Naive thymus-derived CD4-positive, alpha-beta T cell (primary cell): ENCODE measurements at regions of chr9 and their contacts with region 1.

Region 1: DNA sequence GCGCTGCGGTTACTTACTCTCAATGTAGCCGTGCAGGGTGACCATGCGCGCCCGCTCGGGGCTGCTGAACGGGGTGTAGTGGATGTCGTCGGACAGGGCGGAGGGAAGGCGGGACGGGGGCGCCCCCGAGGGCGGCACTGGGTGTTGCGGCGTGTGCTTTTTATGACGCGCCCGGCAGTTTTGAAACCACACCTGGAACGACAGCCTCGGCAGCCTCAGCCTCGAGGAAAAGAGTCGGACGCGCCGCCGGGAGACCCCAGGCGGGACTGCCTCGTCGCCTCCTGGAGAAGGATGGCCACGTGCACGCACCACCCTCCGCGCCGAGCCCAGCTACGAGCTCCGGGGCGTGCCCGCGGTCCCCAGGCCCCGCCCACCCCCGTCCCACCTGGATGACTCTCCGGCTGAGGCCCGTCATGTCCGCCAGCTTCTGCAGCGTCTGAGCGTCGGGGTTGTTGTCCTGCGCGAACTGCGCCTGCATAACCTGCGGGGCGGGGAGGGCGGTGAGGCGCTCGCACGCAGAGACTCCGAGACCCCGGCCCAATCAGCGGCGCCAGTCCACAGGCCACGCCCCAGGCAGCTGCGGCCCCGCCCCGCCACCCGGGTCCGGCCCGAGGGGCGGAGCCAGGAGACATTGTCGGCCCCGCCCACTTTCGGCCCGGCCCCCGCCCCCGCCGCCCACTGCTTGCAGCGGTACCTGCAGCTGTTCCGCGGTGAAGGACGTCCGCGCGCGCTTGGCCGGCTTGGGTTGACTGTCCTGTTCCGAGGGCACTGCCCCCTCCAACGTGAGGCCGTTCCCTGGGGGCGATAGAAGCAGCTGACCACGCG is 15.0 kb downstream of the LHX6 start:
- DNase-seq: peak; percentile 11 to 66 (median 28)
- ATAC-seq: peak; percentile 75
- H3K4me3 ChIP-seq: peak overlapping the region; percentile 35
- H3K4me3 Mint-ChIP-seq: peak overlapping the region; percentile 61 to 83 (median 76)
- H3K27ac ChIP-seq: no peak overlapping the region
- H3K27ac Mint-ChIP-seq: no peak overlapping the region
- H3K4me1 ChIP-seq: peaks cover 0 to 10% of the 10 kb centered on the region in 2 donors
- H3K4me1 Mint-ChIP-seq: peaks cover 13 to 25% (median 20%) of the 10 kb centered on the region in 7 donors
- H3K27me3 ChIP-seq: peaks cover 6 to 22% of the 10 kb centered on the region in 2 donors
- H3K27me3 Mint-ChIP-seq: peaks cover 66 to 90% (median 75%) of the 10 kb centered on the region in 5 donors

Region 2: DNA sequence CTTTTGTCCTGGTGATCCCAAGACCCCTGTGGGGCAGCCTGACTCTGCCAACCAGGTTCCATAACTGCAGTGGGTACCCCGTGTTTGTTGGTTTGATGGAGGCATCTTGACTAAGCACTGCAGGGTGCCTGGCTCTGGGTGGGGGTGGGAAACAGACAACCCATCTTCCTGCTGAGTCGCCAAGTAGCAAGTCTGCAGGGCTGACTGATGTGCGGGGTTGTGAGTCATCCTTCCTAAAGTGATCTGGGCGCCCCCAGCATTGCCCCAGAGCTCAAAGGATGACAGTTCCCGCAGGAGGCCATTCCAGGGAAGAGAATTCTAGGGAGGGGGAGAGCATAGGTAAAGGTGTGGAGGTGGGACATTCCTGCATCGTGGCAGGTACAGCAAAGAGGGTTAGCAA is 538.8 kb before region 1 on chr9:
- CTCF ChIA-PET with region 1: no interaction called
- POLR2A ChIA-PET with region 1: no interaction called
- intact Hi-C with region 1: no loop called
- DNase-seq: no peak
- ATAC-seq: no peak
- H3K4me3 ChIP-seq: no peak overlapping the region
- H3K4me3 Mint-ChIP-seq: no peak overlapping the region
- H3K27ac ChIP-seq: no peak overlapping the region
- H3K27ac Mint-ChIP-seq: no peak overlapping the region
- H3K4me1 ChIP-seq: no peaks in the 10 kb centered on the region
- H3K4me1 Mint-ChIP-seq: no peaks in the 10 kb centered on the region
- H3K27me3 ChIP-seq: no peaks in the 10 kb centered on the region
- H3K27me3 Mint-ChIP-seq: peaks cover 0 to 39% (median 9%) of the 10 kb centered on the region in 5 donors

Region 3: GRCh38 chr9:122159026-122159924 is 54.5 kb before region 1 on chr9 and contains the starts of genes MORN5 and NDUFA8:
- CTCF ChIA-PET with region 1: no interaction called
- POLR2A ChIA-PET with region 1: no interaction called
- intact Hi-C with region 1: loop called in 1 of 2 experiments (anchors 2 kb)
- DNase-seq: peak; percentile 94 to 97 (median 96)
- ATAC-seq: peak; percentile 98
- H3K4me3 ChIP-seq: peak within 1 kb of the TSS; percentile 74
- H3K4me3 Mint-ChIP-seq: peak within 1 kb of the TSS; percentile 94 to 100 (median 99)
- H3K27ac ChIP-seq: peak within 1 kb of the TSS; percentile 88
- H3K27ac Mint-ChIP-seq: peak within 1 kb of the TSS; percentile 90 to 99 (median 96)
- H3K4me1 ChIP-seq: peaks cover 7% of the 10 kb centered on the region in 2 donors
- H3K4me1 Mint-ChIP-seq: peaks cover 23 to 51% (median 47%) of the 10 kb centered on the region in 7 donors
- H3K27me3 ChIP-seq: no peaks in the 10 kb centered on the region
- H3K27me3 Mint-ChIP-seq: peaks cover 8 to 25% (median 20%) of the 10 kb centered on the region in 5 donors
- total RNA-seq, gene MORN5: not detected
- total RNA-seq, gene NDUFA8: 6.7 to 35.0 (median 15.6) TPM

Region 4: GRCh38 chr9:122200960-122201595 is 12.7 kb before region 1 on chr9:
- CTCF ChIA-PET with region 1: no interaction called
- POLR2A ChIA-PET with region 1: no interaction called
- intact Hi-C with region 1: no loop called
- DNase-seq: no peak
- ATAC-seq: no peak
- H3K4me3 ChIP-seq: no peak overlapping the region
- H3K4me3 Mint-ChIP-seq: no peak overlapping the region
- H3K27ac ChIP-seq: no peak overlapping the region
- H3K27ac Mint-ChIP-seq: no peak overlapping the region
- H3K4me1 ChIP-seq: no peaks in the 10 kb centered on the region
- H3K4me1 Mint-ChIP-seq: peaks cover 0 to 3% (median 0%) of the 10 kb centered on the region in 7 donors
- H3K27me3 ChIP-seq: no peaks in the 10 kb centered on the region
- H3K27me3 Mint-ChIP-seq: peaks cover 0 to 10% (median 0%) of the 10 kb centered on the region in 5 donors

Region 5: DNA sequence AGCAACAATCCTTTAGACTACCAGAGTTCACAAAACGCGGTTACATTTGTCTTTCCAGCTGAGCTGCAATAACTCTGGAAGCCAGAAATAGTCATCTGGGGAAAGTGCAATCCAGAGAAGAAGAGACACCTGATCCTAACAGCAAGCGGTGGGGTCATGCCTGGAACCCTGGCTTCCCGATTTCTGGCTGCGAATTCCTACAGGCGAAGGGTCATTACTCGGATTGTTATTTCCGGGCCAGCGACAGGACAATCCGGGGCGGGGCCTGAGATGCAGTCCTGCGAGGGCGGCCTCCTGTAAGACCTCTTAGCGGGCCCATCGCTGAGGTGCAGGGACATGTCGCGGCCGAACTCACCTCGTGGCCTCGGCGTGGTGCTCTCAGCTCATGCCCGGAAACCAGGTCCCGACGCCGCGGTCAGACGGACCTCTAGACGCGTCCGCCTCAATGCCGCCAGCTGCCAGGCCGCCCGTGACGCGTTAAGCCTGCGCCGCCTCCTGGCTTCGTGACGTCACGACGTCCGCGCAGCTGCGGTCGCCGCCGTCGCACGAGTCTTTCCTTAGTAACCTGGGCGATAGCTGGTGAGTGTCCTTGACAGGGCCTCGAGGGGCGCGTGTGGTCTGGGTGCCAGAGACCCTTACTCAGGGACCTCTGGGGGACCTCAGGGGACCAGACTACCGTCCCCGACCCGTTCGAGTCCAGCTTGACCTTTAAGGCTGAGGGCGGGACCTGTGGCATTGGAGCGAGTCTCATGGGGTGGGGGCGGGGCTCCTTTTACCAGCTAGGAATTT is 50.8 kb after region 1 on chr9 and contains the starts of genes MRRF and RBM18:
- CTCF ChIA-PET with region 1: no interaction called
- POLR2A ChIA-PET with region 1: no interaction called
- intact Hi-C with region 1: loop called in 1 of 2 experiments (anchors 1 kb)
- DNase-seq: peak; percentile 80 to 93 (median 88)
- ATAC-seq: peak; percentile 92
- H3K4me3 ChIP-seq: peak within 1 kb of the TSS; percentile 93
- H3K4me3 Mint-ChIP-seq: peak within 1 kb of the TSS; percentile 88 to 100 (median 98)
- H3K27ac ChIP-seq: peak within 1 kb of the TSS; percentile 94
- H3K27ac Mint-ChIP-seq: peak within 1 kb of the TSS; percentile 76 to 100 (median 99)
- H3K4me1 ChIP-seq: peaks cover 18 to 25% of the 10 kb centered on the region in 2 donors
- H3K4me1 Mint-ChIP-seq: peaks cover 40 to 71% (median 61%) of the 10 kb centered on the region in 7 donors
- H3K27me3 ChIP-seq: no peaks in the 10 kb centered on the region
- H3K27me3 Mint-ChIP-seq: peaks cover 0 to 2% (median 0%) of the 10 kb centered on the region in 5 donors
- total RNA-seq, gene MRRF: 28.1 to 35.8 (median 33.3) TPM
- total RNA-seq, gene RBM18: 14.2 to 22.9 (median 15.8) TPM